Caco-2 (cell line): ENCODE measurements at regions of chr11 and their contacts with region 1.

Region 1: DNA sequence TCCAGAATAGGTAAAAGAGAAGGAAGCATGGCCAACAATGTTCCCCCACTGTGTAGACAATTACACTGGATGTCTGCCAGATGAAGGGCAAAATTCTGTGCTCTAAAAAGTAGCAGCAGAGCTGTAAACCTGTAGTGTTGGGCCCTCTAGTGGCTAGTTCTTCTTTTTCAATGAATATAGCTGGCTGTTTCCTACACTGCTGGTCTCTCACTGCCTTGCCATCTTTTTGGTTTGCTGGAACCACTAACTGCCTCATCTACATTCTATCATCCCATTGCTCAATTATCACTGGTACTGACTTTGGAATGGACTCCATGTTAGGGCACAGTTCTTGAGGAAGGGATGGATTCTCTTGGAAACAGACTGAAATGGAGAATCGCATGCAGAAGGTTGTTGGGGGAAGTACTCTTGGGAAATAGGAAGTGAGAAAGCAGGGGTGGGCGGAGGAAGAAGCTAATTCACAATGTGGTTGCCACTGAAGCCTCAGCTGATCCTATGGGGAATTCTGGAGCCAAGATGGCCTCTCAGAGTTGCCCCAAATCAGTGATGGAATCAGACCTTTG is 17.9 kb downstream of the KCNE3 start:
- DNase-seq: peak; percentile 60 to 81
- H3K4me3 ChIP-seq: no peak overlapping the region
- H3K4me3 Mint-ChIP-seq: no peak overlapping the region
- H3K27ac Mint-ChIP-seq: no peak overlapping the region
- H3K4me1 ChIP-seq: peaks cover 12% of the 10 kb centered on the region
- H3K4me1 Mint-ChIP-seq: peaks cover 9% of the 10 kb centered on the region
- H3K27me3 ChIP-seq: no peaks in the 10 kb centered on the region
- H3K27me3 Mint-ChIP-seq: no peaks in the 10 kb centered on the region
- CTCF ChIP-seq: peak; percentile 84 to 88

Region 2: GRCh38 chr11:73961321-73961720 is 488.1 kb before region 1 on chr11:
- CTCF ChIA-PET with region 1: interaction called, 9 read pairs
- POLR2A ChIA-PET with region 1: no interaction called
- intact Hi-C with region 1: loop called (anchors 1 kb)
- DNase-seq: peak in 1 of 2 experiments; percentile 32
- H3K4me3 ChIP-seq: no peak overlapping the region
- H3K4me3 Mint-ChIP-seq: no peak overlapping the region
- H3K27ac Mint-ChIP-seq: no peak overlapping the region
- H3K4me1 ChIP-seq: no peaks in the 10 kb centered on the region
- H3K4me1 Mint-ChIP-seq: peaks cover 1% of the 10 kb centered on the region
- H3K27me3 ChIP-seq: no peaks in the 10 kb centered on the region; the same call in 1 of the 2 replicates
- H3K27me3 Mint-ChIP-seq: no peaks in the 10 kb centered on the region
- CTCF ChIP-seq: no peak

Region 3: DNA sequence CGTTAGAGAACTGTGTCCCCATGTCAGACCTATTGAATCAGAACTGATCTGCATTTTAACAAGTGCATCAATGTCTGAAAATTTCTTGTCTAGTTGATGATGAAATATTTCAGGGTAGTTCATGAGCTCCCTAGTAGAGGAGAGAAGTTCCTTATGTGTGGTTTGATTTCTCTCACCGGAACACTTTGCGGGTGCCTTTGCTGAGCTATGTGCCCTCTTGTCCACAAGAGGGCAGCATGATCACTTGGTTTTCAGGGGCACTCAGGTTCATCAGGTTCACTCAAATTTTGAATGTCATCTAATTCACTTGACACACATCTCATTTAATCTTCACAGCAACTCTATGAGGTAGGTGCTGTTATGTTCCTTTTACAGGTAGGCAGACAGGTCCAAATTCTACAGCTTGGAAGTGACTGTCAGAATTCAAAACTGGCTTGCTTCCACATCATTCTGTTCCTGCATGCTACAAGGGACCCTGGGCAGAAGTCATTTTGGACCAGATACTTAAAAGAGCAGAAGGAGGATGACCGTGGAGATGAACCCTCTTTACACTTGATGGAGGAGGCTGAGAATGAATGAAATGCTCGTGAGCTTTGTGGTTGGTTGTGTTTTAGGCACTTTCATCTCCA is 193.6 kb before region 1 on chr11:
- CTCF ChIA-PET with region 1: interaction called, 77 read pairs
- POLR2A ChIA-PET with region 1: no interaction called
- intact Hi-C with region 1: loop called (anchors 1 kb)
- DNase-seq: peak in 1 of 2 experiments; percentile 65
- H3K4me3 ChIP-seq: no peak overlapping the region
- H3K4me3 Mint-ChIP-seq: no peak overlapping the region
- H3K27ac Mint-ChIP-seq: no peak overlapping the region
- H3K4me1 ChIP-seq: no peaks in the 10 kb centered on the region
- H3K4me1 Mint-ChIP-seq: no peaks in the 10 kb centered on the region
- H3K27me3 ChIP-seq: no peaks in the 10 kb centered on the region
- H3K27me3 Mint-ChIP-seq: no peaks in the 10 kb centered on the region
- CTCF ChIP-seq: peak; percentile 91 to 94

Region 4: DNA sequence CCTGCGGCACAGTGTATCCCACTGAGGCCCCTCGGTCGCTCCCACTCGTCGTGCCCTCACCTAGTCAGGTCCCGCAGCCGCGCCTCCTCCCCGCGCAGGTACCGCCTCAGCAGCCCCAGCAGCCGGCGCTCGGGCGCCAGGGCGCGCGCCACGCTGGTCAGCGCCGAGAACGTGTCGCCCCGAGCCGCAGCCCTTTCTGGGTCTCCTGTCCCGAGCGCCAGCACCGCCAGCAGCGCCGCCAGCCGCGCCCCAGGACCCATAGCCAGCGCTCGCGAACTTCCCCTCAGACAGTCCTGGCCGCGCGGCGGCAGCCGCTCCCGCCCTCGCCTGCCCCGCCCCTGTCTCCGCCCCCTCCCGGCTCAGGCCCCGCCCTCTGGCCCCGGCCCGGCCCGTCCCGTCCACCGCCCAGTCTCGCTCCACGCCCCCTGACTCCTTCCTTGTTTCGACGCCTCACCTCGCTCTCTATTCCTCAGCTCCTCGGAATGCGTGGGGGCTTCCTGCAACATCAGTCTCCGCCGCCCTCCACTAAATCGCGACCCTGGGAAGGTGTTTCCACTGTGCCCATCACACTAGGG is 138.0 kb before region 1 on chr11 and contains the start of gene P4HA3:
- CTCF ChIA-PET with region 1: interaction called, 4 read pairs
- POLR2A ChIA-PET with region 1: no interaction called
- intact Hi-C with region 1: loop called (anchors 5 kb)
- DNase-seq: peak; percentile 86 to 90
- H3K4me3 ChIP-seq: peak within 1 kb of the TSS; percentile 32
- H3K4me3 Mint-ChIP-seq: peak within 1 kb of the TSS; percentile 79
- H3K27ac Mint-ChIP-seq: no peak within 1 kb of the TSS
- H3K4me1 ChIP-seq: peaks cover 6% of the 10 kb centered on the region; the same call in 1 of the 2 replicates
- H3K4me1 Mint-ChIP-seq: peaks cover 5% of the 10 kb centered on the region
- H3K27me3 ChIP-seq: no peaks in the 10 kb centered on the region; the same call in 1 of the 2 replicates
- H3K27me3 Mint-ChIP-seq: peaks cover 19% of the 10 kb centered on the region
- CTCF ChIP-seq: peak in 1 of 2 experiments; percentile 13
- total RNA-seq, gene P4HA3: 0.42 TPM in 1 of 2 replicates, not detected in the other

Region 5: DNA sequence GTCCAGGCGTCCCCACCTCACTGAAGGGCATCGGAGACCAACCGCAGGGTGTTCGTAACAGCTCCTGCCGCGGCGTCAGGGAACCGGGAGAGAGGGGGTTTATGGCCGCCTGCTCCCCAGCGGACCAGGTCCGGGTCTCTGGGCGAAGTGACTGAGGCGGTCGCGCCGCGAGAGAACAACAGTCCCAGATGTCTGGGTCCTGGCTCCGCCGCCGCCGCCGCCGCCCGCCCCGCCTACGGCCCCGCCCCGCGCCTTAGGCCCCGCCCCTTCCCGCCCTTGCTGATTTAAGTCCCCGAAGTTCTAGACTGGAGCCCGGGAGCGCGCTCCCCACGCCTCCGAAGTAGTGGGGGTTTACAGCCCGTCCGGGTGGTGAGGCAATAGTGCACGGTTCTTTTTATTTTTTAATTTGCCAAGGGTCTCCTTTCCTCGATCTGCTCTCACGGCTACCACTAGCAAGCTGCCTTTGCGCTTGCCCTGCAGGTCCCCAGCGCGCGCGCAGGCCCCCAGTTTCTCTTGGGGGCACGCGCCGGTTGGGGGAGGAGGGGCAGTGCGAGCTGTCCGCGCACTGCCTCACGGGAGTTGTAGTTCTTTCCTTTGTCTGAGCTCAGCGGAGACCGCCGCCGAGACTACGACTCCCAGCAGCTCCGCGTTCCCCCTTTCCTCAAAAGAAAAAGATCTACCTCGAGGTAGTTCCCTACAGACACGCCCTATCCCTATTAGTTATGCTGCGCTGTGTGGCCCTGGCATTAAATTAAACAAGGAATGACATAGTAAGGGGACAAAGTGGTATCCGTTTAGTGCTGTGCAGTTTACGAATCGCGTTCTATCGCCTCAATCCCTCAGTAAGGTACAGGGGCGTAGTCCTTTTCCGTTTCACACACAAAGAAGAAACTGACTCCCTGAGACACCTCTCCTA is 50.9 kb before region 1 on chr11 and contains the start of gene PGM2L1:
- CTCF ChIA-PET with region 1: interaction called, 24 read pairs
- POLR2A ChIA-PET with region 1: no interaction called
- intact Hi-C with region 1: loop called (anchors 1 kb)
- DNase-seq: peak; percentile 97
- H3K4me3 ChIP-seq: peak within 1 kb of the TSS; percentile 81
- H3K4me3 Mint-ChIP-seq: peak within 1 kb of the TSS; percentile 100
- H3K27ac Mint-ChIP-seq: peak within 1 kb of the TSS; percentile 100
- H3K4me1 ChIP-seq: no peaks in the 10 kb centered on the region
- H3K4me1 Mint-ChIP-seq: peaks cover 13% of the 10 kb centered on the region
- H3K27me3 ChIP-seq: no peaks in the 10 kb centered on the region
- H3K27me3 Mint-ChIP-seq: no peaks in the 10 kb centered on the region
- CTCF ChIP-seq: no peak
- total RNA-seq, gene PGM2L1: 7.7 and 8.0 TPM in 2 replicates

Region 6: DNA sequence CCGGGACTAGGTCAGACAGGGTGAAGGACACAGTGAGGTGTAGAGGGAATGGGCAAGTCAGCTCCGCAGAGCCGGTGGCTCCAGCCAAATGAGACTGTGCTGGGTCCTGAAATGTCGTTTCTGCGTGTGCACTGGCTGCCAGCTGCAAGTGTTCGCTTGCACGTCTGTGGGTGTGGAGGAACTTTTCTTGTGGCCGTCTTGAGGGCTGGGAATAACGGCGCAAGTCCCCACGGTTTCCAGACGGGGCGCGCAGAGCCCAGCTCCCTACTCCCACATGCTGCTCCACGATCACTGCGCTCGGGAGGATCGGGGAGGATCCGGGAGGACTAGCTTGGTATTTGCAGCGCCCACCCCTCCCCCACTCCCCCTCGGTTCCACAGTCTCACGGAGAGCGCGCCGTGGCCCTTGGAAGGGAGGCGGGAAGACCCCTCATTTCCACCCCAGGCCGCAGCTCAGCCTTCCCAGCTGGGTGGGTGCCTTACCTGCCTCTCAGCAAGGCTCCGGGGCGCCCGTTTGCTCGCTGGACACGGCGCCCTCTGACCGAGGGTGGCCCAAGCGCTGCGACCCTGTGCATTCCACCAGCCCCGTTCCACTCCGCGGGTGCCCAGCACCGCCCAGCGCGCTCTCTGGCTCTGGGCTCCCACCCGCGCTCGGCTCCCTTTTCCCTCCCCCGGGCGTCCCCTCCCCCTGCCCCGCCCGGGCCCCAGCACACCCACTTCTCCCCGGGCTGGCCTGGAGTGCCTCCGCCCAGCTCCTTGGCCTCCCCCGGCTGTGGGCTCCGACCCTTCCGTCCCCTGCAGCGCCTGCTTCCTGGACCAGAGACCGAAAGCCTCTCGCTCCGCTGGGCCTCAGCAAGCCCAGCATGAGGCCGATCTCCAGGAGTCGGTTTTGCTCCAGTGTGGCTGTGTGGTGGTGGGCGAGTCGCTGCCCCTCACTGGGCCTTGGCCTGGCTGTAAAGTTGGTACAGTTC is 17.8 kb after region 1 on chr11 and contains the start of gene KCNE3:
- CTCF ChIA-PET with region 1: interaction called, 10 read pairs
- POLR2A ChIA-PET with region 1: no interaction called
- intact Hi-C with region 1: loop called (anchors 1 kb)
- DNase-seq: peak; percentile 46 to 60
- H3K4me3 ChIP-seq: peak within 1 kb of the TSS; percentile 52
- H3K4me3 Mint-ChIP-seq: peak within 1 kb of the TSS; percentile 50
- H3K27ac Mint-ChIP-seq: peak within 1 kb of the TSS; percentile 91
- H3K4me1 ChIP-seq: peaks cover 54% of the 10 kb centered on the region
- H3K4me1 Mint-ChIP-seq: peaks cover 39% of the 10 kb centered on the region
- H3K27me3 ChIP-seq: no peaks in the 10 kb centered on the region
- H3K27me3 Mint-ChIP-seq: no peaks in the 10 kb centered on the region
- CTCF ChIP-seq: no peak
- total RNA-seq, gene KCNE3: 48.1 and 58.2 TPM in 2 replicates

Region 7: GRCh38 chr11:74492974-74493790 is 43.7 kb after region 1 on chr11 and contains the start of gene LIPT2:
- CTCF ChIA-PET with region 1: interaction called, 34 read pairs
- POLR2A ChIA-PET with region 1: interaction called, 10 read pairs
- intact Hi-C with region 1: loop called (anchors 1 kb)
- DNase-seq: peak; percentile 100
- H3K4me3 ChIP-seq: peak within 1 kb of the TSS; percentile 88
- H3K4me3 Mint-ChIP-seq: peak within 1 kb of the TSS; percentile 76
- H3K27ac Mint-ChIP-seq: peak within 1 kb of the TSS; percentile 82
- H3K4me1 ChIP-seq: peaks cover 7% of the 10 kb centered on the region
- H3K4me1 Mint-ChIP-seq: peaks cover 10% of the 10 kb centered on the region
- H3K27me3 ChIP-seq: no peaks in the 10 kb centered on the region
- H3K27me3 Mint-ChIP-seq: no peaks in the 10 kb centered on the region
- CTCF ChIP-seq: no peak
- total RNA-seq, gene LIPT2: 10.5 and 14.4 TPM in 2 replicates